Head of caudate nucleus (tissue), 42 donors: ENCODE measurements at regions of chr16 and their contacts with region 1.

Region 1: GRCh38 chr16:21952793-21953540 is at the start of gene UQCRC2:
- DNase-seq: peak; percentile 89 to 98 (median 94)

Region 2: GRCh38 chr16:22195695-22196558 is 243.0 kb after region 1 on chr16:
- intact Hi-C with region 1: loop called (anchors 5 kb)
- DNase-seq: peak; percentile 75 to 98 (median 93)